PC-3 (cell line): ENCODE measurements at regions of chr1 and their contacts with region 1.

Region 1: DNA sequence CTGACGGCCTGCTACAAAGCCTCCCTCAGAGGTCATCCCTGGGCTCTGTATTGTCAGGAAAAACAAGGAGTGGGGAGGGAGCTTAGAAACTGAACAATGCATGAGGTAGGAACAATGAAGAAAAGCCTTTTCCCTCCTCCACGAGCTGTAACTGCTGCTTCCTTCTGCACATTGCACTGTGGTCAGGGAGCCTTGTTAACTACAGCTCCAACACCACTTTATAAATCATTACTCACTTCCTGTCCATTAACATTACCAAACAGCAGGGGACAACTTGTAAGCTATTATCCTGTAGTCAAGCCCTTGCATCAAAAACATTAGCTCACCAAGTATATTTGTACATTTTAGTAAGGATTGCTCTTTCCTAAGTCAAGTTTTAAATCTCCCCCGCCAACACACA is 336.0 kb upstream of the NR5A2 start:
- DNase-seq: peak; percentile 65
- ATAC-seq: peak; percentile 96
- H3K4me3 ChIP-seq: no peak overlapping the region
- H3K27ac ChIP-seq: no peak overlapping the region; the same call in 1 of the 2 replicates
- H3K4me1 ChIP-seq: peaks cover 8% of the 10 kb centered on the region
- H3K27me3 ChIP-seq: no peaks in the 10 kb centered on the region
- CTCF ChIP-seq: no peak

Region 2: DNA sequence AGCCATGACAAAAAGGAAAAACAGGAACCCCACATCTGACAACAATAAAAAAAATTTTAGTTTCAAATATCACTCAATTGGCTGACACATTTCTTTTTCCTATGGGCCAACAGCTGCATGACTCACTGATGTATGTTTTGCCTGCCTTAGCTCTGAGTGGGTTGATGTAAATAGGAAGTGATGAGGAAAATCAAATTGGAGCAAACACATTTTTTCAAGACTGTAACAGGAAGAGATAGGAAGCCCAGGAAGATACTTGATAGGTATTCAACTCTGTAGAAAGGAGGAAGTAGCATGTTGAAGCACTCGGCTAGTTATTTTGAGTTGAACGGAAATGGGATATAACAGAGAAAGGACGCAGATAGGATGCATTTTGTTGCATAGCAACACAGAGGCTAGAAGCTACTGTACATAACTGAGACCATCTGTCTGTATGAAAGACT is 168.0 kb after region 1 on chr1:
- CTCF ChIA-PET with region 1: no interaction called
- POLR2A ChIA-PET with region 1: no interaction called
- intact Hi-C with region 1: loop called (anchors 10 kb)
- DNase-seq: peak; percentile 98
- ATAC-seq: peak; percentile 97
- H3K4me3 ChIP-seq: no peak overlapping the region
- H3K27ac ChIP-seq: peak overlapping the region; percentile 3
- H3K4me1 ChIP-seq: peaks cover 24% of the 10 kb centered on the region
- H3K27me3 ChIP-seq: peaks cover 3% of the 10 kb centered on the region; the same call in 1 of the 2 replicates
- CTCF ChIP-seq: no peak

Region 3: GRCh38 chr1:199918196-199918771 is 226.7 kb after region 1 on chr1:
- CTCF ChIA-PET with region 1: no interaction called
- POLR2A ChIA-PET with region 1: no interaction called
- intact Hi-C with region 1: no loop called
- DNase-seq: peak; percentile 60
- ATAC-seq: peak; percentile 74
- H3K4me3 ChIP-seq: no peak overlapping the region
- H3K27ac ChIP-seq: no peak overlapping the region
- H3K4me1 ChIP-seq: peaks cover 12% of the 10 kb centered on the region
- H3K27me3 ChIP-seq: no peaks in the 10 kb centered on the region
- CTCF ChIP-seq: no peak

Region 4: GRCh38 chr1:200564319-200564718 is 872.8 kb after region 1 on chr1:
- CTCF ChIA-PET with region 1: interaction called, 13 read pairs
- POLR2A ChIA-PET with region 1: no interaction called
- intact Hi-C with region 1: no loop called
- DNase-seq: no peak
- ATAC-seq: no peak
- H3K4me3 ChIP-seq: no peak overlapping the region
- H3K27ac ChIP-seq: no peak overlapping the region
- H3K4me1 ChIP-seq: no peaks in the 10 kb centered on the region
- H3K27me3 ChIP-seq: no peaks in the 10 kb centered on the region
- CTCF ChIP-seq: no peak